ENCODE measurements at regions of chr4 and their contacts with region 1.

Region 1: DNA sequence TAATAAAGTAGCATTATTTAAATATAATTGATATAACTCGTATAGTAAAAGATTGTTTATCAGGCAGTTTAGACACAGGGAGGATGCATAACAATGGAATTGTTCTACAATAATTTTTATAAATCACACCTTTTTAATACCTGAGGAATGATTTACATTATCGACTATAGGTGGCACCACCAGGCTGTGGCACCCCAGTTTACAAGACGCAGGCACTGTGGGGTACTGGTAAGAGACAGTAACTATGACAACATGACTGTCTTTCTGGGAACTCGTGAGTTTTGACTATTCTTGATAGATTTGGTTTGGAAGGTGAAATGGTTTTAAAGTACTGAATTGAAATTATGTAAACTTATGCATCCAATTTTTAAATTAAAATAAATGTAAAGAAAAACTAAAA is 27.1 kb upstream of the STBD1 start:
- DNase-seq: peak; percentile 28 to 36 (median 36)
- H3K4me3 ChIP-seq: no peak overlapping the region
- H3K27ac ChIP-seq: no peak overlapping the region
- H3K4me1 ChIP-seq: peaks cover 0 to 4% (median 0%) of the 10 kb centered on the region in 4 experiments
- H3K27me3 ChIP-seq: no peaks in the 10 kb centered on the region

Region 2: GRCh38 chr4:76305971-76306881 is 26.8 kb after region 1 on chr4 and contains the start of gene STBD1:
- CTCF ChIA-PET with region 1: interaction called, 12 read pairs
- POLR2A ChIA-PET with region 1: no interaction called
- DNase-seq: peak; percentile 39 to 74 (median 58)
- H3K4me3 ChIP-seq: peak within 1 kb of the TSS; percentile 74 to 91 (median 84)
- H3K27ac ChIP-seq: peak within 1 kb of the TSS in 1 of 2 experiments; percentile 49
- H3K4me1 ChIP-seq: peaks cover 18 to 53% (median 41%) of the 10 kb centered on the region in 4 experiments
- H3K27me3 ChIP-seq: no peaks in the 10 kb centered on the region

Measured in common myeloid progenitor, CD34-positive (primary cell).